ENCODE measurements at regions of chr18 and their contacts with region 1.

Region 1: DNA sequence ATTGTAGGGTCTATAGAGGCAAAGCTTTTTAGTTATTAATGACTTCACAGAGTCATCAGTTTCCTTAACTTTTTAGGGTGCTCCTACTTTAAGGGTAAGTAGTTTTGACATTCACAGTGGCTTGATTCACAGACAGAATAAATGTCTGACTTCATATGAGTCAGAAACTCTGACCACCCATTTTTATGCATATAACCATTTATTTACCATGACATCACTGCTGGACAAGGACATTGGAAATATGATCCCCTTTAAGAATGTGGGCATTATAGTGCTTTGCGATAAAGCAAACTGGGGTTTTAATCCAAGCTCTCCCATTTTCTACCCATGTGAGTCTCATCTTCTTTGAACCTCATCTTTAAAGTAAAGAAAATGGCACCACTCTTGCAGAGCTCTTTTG is 162.0 kb upstream of the MC4R start:
- DNase-seq: peak; percentile 7
- H3K4me3 ChIP-seq: no peak overlapping the region
- CTCF ChIP-seq: no peak

Region 2: GRCh38 chr18:60549338-60549960 is 14.9 kb after region 1 on chr18:
- CTCF ChIA-PET with region 1: interaction called, 10 read pairs
- POLR2A ChIA-PET with region 1: interaction called, 3 read pairs
- DNase-seq: peak; percentile 53
- H3K4me3 ChIP-seq: no peak overlapping the region
- CTCF ChIP-seq: peak; percentile 60

Measured in AG04449 (cell line).